CD4-positive, alpha-beta T cell (primary cell): ENCODE measurements at regions of chr6 and their contacts with region 1.

Region 1: DNA sequence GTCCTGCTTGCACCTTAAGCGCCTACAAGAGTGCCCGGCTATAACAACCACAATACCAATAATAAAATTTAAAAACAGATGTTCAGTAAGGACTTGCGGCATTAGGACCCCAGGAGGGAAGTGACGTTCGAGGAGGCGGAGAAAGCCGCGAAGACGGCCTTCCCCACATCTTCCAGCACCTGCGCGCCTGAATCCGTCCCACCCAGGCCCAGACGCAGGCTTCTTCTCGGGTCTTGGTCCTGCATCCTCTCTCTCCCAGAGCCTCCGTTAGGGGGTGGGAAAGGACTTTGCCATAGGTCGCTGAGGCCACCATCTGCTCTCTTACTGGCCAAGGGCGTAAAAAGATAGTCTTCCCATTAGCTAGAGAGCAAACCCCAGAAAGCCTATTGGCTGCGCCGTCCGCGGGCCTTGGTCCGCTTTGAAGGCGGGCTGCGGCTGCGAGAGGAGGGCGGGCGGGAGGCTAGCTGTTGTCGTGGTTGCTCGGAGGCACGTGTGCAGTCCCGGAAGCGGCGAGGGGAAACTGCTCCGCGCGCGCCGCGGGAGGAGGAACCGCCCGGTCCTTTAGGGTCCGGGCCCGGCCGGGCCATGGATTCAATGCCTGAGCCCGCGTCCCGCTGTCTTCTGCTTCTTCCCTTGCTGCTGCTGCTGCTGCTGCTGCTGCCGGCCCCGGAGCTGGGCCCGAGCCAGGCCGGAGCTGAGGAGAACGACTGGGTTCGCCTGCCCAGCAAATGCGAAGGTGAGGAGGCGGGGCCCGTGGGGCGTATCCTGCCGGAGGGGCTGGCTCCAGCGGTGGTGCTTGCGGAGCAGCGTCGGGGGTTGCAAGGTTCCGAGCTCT is at the start of gene CNPY3:
- DNase-seq: peak; percentile 90 to 98 (median 92)
- ATAC-seq: peak; percentile 75
- H3K4me3 ChIP-seq: peak within 1 kb of the TSS; percentile 79
- H3K4me3 Mint-ChIP-seq: peak within 1 kb of the TSS; percentile 99
- H3K27ac ChIP-seq: peak within 1 kb of the TSS; percentile 88 to 96
- H3K27ac Mint-ChIP-seq: peak within 1 kb of the TSS; percentile 99
- H3K4me1 ChIP-seq: peaks cover 52% of the 10 kb centered on the region
- H3K4me1 Mint-ChIP-seq: peaks cover 53% of the 10 kb centered on the region
- H3K27me3 ChIP-seq: no peaks in the 10 kb centered on the region
- H3K27me3 Mint-ChIP-seq: no peaks in the 10 kb centered on the region
- CTCF ChIP-seq: no peak
- total RNA-seq, gene CNPY3: 41.2 to 43.8 TPM

Region 2: DNA sequence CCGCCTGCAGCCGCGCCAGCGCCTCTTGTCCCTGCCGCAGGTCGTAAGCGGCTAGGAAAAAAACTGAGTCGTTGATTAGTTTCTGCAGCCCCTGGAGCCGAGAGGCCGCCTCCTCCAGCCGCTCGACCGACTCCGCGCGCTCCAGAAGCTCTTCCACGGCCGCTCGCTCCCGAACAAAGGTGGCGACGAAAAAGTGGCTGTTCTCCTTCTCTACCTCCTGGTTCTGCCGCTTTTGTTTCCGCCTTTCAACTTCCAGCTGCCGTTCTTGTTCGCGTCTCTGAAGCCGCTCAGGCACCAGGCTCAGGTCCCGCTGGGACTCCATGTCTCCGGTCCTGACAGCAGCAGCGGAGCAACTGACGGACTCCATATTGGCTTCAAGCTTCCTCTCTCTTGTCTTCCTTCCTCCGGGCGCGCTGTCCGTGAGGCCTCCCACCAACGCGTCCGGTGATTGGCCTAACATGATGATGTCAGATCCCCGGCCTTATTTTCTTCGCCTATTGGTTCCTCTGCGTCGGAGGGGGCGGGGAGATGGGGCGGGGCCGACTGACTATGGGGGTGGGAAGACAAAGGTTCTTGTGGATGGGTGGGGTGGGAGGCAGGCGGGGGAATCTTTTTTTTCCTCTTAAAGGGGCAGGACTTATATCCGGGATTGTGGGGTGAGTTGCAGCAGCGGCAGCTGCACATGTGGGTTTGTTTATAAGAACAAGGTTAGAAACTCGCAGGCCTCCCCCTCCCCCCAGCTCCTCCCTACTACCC is 183.3 kb before region 1 on chr6 and contains the start of gene TBCC:
- CTCF ChIA-PET with region 1: no interaction called
- POLR2A ChIA-PET with region 1: interaction called, 32 read pairs
- intact Hi-C with region 1: no loop called
- DNase-seq: peak; percentile 86 to 98 (median 92)
- ATAC-seq: peak; percentile 77
- H3K4me3 ChIP-seq: peak within 1 kb of the TSS; percentile 96
- H3K4me3 Mint-ChIP-seq: peak within 1 kb of the TSS; percentile 100
- H3K27ac ChIP-seq: peak within 1 kb of the TSS; percentile 89 to 94
- H3K27ac Mint-ChIP-seq: peak within 1 kb of the TSS; percentile 96
- H3K4me1 ChIP-seq: peaks cover 43% of the 10 kb centered on the region
- H3K4me1 Mint-ChIP-seq: peaks cover 35% of the 10 kb centered on the region
- H3K27me3 ChIP-seq: no peaks in the 10 kb centered on the region
- H3K27me3 Mint-ChIP-seq: no peaks in the 10 kb centered on the region
- CTCF ChIP-seq: no peak
- total RNA-seq, gene TBCC: 67.3 to 68.3 TPM

Region 3: GRCh38 chr6:42864602-42865001 is 64.6 kb before region 1 on chr6:
- CTCF ChIA-PET with region 1: no interaction called
- POLR2A ChIA-PET with region 1: no interaction called
- intact Hi-C with region 1: no loop called
- DNase-seq: no peak
- ATAC-seq: no peak
- H3K4me3 ChIP-seq: no peak overlapping the region
- H3K4me3 Mint-ChIP-seq: no peak overlapping the region
- H3K27ac ChIP-seq: peak overlapping the region in 1 of 2 donors; percentile 10
- H3K27ac Mint-ChIP-seq: no peak overlapping the region
- H3K4me1 ChIP-seq: no peaks in the 10 kb centered on the region
- H3K4me1 Mint-ChIP-seq: no peaks in the 10 kb centered on the region
- H3K27me3 ChIP-seq: no peaks in the 10 kb centered on the region
- H3K27me3 Mint-ChIP-seq: no peaks in the 10 kb centered on the region
- CTCF ChIP-seq: no peak

Region 4: GRCh38 chr6:42879372-42880239 is 49.6 kb before region 1 on chr6 and contains the start of gene RPL7L1:
- CTCF ChIA-PET with region 1: interaction called, 3 read pairs
- POLR2A ChIA-PET with region 1: interaction called, 25 read pairs
- intact Hi-C with region 1: loop called in 1 of 2 experiments (anchors 5 kb)
- DNase-seq: peak; percentile 68 to 93 (median 79)
- ATAC-seq: peak; percentile 92
- H3K4me3 ChIP-seq: peak within 1 kb of the TSS; percentile 69
- H3K4me3 Mint-ChIP-seq: peak within 1 kb of the TSS; percentile 93
- H3K27ac ChIP-seq: peak within 1 kb of the TSS; percentile 94 to 95
- H3K27ac Mint-ChIP-seq: peak within 1 kb of the TSS; percentile 97
- H3K4me1 ChIP-seq: peaks cover 41% of the 10 kb centered on the region
- H3K4me1 Mint-ChIP-seq: peaks cover 23% of the 10 kb centered on the region
- H3K27me3 ChIP-seq: no peaks in the 10 kb centered on the region
- H3K27me3 Mint-ChIP-seq: no peaks in the 10 kb centered on the region
- CTCF ChIP-seq: no peak
- total RNA-seq, gene RPL7L1: 76.1 TPM

Region 5: GRCh38 chr6:42978839-42979522 is 49.8 kb after region 1 on chr6 and contains the start of gene PEX6:
- CTCF ChIA-PET with region 1: interaction called, 4 read pairs
- POLR2A ChIA-PET with region 1: interaction called, 135 read pairs
- intact Hi-C with region 1: loop called (anchors 1 to 2 kb)
- DNase-seq: peak; percentile 81 to 98 (median 93)
- ATAC-seq: peak; percentile 94
- H3K4me3 ChIP-seq: peak within 1 kb of the TSS; percentile 85
- H3K4me3 Mint-ChIP-seq: peak within 1 kb of the TSS; percentile 95
- H3K27ac ChIP-seq: peak within 1 kb of the TSS; percentile 83 to 85
- H3K27ac Mint-ChIP-seq: peak within 1 kb of the TSS; percentile 97
- H3K4me1 ChIP-seq: peaks cover 50% of the 10 kb centered on the region
- H3K4me1 Mint-ChIP-seq: peaks cover 47% of the 10 kb centered on the region
- H3K27me3 ChIP-seq: no peaks in the 10 kb centered on the region
- H3K27me3 Mint-ChIP-seq: no peaks in the 10 kb centered on the region
- CTCF ChIP-seq: no peak
- total RNA-seq, gene PEX6: 12.8 to 13.6 TPM

Region 6: GRCh38 chr6:43021270-43022047 is 92.3 kb after region 1 on chr6 and contains the start of gene RRP36:
- CTCF ChIA-PET with region 1: no interaction called
- POLR2A ChIA-PET with region 1: interaction called, 21 read pairs
- intact Hi-C with region 1: no loop called
- DNase-seq: peak; percentile 33 to 80 (median 63)
- ATAC-seq: peak; percentile 73
- H3K4me3 ChIP-seq: peak within 1 kb of the TSS; percentile 84
- H3K4me3 Mint-ChIP-seq: peak within 1 kb of the TSS; percentile 98
- H3K27ac ChIP-seq: peak within 1 kb of the TSS; percentile 57 to 62
- H3K27ac Mint-ChIP-seq: peak within 1 kb of the TSS; percentile 83
- H3K4me1 ChIP-seq: peaks cover 52% of the 10 kb centered on the region
- H3K4me1 Mint-ChIP-seq: peaks cover 38% of the 10 kb centered on the region
- H3K27me3 ChIP-seq: no peaks in the 10 kb centered on the region
- H3K27me3 Mint-ChIP-seq: no peaks in the 10 kb centered on the region
- CTCF ChIP-seq: no peak
- total RNA-seq, gene RRP36: 17.2 to 17.7 TPM

Region 7: DNA sequence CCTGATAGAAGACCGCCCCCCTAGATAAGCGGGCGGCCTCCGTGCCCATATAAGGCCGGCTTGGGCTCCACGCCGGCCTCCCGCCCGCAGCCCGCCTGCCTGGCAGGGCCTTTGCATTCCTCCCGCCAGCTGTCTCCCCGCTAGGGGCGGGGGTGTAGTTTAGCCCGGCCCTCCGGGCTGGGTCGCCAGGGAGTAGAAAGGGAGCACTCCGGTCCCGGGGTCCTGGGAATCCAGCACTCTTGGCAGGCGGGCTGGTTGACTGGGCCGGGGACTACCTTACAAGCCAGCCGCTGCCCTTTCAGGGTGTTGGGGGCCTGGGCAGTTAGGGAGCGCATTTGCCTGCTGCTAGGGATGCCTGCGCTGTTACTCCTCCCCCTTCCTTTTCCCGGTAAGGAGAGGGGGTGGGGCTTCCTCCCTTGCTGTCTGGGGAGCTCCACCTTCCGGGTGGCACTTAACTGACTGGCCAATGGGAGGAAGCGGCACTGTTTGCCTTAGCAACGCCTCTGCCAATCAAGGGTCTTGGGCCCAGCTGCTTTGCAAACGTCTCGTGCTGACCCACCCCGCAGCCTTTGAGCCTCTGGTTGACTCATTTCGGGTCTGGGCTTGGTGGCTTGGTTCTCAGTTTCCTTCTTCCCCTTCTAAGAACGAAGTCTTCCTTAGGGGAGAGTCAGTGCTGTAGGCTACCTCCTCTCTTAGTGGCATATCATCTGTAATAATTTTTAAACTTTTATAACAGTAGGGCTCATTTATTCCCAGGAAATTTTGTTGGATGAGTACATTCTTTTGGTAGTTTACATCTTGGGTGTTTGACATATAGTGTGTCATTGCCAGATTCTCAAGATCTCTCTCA is 245.3 kb after region 1 on chr6:
- CTCF ChIA-PET with region 1: no interaction called
- POLR2A ChIA-PET with region 1: interaction called, 17 read pairs
- intact Hi-C with region 1: loop called (anchors 1 kb)
- DNase-seq: peak; percentile 73 to 99 (median 91)
- ATAC-seq: peak; percentile 51
- H3K4me3 ChIP-seq: peak overlapping the region; percentile 83
- H3K4me3 Mint-ChIP-seq: peak overlapping the region; percentile 89
- H3K27ac ChIP-seq: peak overlapping the region; percentile 78 to 83
- H3K27ac Mint-ChIP-seq: peak overlapping the region; percentile 88
- H3K4me1 ChIP-seq: peaks cover 52% of the 10 kb centered on the region
- H3K4me1 Mint-ChIP-seq: peaks cover 42% of the 10 kb centered on the region
- H3K27me3 ChIP-seq: no peaks in the 10 kb centered on the region
- H3K27me3 Mint-ChIP-seq: no peaks in the 10 kb centered on the region
- CTCF ChIP-seq: no peak